H1 (cell line): ENCODE measurements at regions of chr16 and their contacts with region 1.

Region 1: GRCh38 chr16:75238132-75238852 is 13.1 kb downstream of the BCAR1 start:
- DNase-seq: no peak
- H3K4me3 ChIP-seq: no peak overlapping the region
- H3K27ac ChIP-seq: peak overlapping the region; percentile 49; the same call in 1 of the 2 replicates
- H3K4me1 ChIP-seq: peaks cover 0 to 6% (median 2%) of the 10 kb centered on the region in 4 experiments; a peak in 2 of 7 replicates
- H3K27me3 ChIP-seq: no peaks in the 10 kb centered on the region
- CTCF ChIP-seq: no peak
- EP300 ChIP-seq: no peak
- POLR2A ChIP-seq: no peak
- RAD21 ChIP-seq: no peak

Region 2: GRCh38 chr16:75138636-75139035 is 99.7 kb before region 1 on chr16:
- CTCF ChIA-PET with region 1: no interaction called
- POLR2A ChIA-PET with region 1: no interaction called
- DNase-seq: peak in 1 of 2 experiments; percentile 61
- H3K4me3 ChIP-seq: no peak overlapping the region
- H3K27ac ChIP-seq: no peak overlapping the region
- H3K4me1 ChIP-seq: peaks cover 0 to 7% (median 0%) of the 10 kb centered on the region in 4 experiments; a peak in 1 of 7 replicates
- H3K27me3 ChIP-seq: no peaks in the 10 kb centered on the region
- CTCF ChIP-seq: no peak
- EP300 ChIP-seq: no peak
- POLR2A ChIP-seq: no peak
- RAD21 ChIP-seq: no peak

Region 3: DNA sequence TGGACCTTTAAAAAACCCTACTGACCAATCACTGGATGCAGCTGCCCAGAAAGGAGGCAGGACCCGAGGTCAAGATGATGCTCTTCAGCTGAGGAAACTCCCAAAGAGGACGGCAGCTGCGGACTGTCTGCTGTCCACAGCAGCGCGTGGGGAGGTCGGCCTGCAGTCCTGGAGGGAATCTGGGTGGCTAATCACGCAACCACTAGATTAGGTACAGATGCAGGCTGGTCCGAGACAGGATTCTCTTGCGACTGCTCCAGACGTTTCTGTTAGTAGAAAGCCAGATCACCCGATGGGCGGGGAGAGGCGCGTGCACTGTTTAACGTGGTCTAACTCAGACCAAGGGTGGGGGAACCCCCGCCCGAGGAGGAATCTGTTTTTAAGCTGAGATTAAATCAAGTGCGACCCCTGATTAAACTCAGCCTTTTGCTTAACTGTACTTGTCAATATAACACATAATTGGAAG is 40.1 kb before region 1 on chr16:
- CTCF ChIA-PET with region 1: interaction called, 57 read pairs
- POLR2A ChIA-PET with region 1: interaction called, 3 read pairs
- DNase-seq: no peak
- H3K4me3 ChIP-seq: no peak overlapping the region
- H3K27ac ChIP-seq: no peak overlapping the region
- H3K4me1 ChIP-seq: peaks cover 0 to 2% (median 0%) of the 10 kb centered on the region in 4 experiments; a peak in 3 of 7 replicates
- H3K27me3 ChIP-seq: no peaks in the 10 kb centered on the region
- CTCF ChIP-seq: no peak
- EP300 ChIP-seq: no peak
- POLR2A ChIP-seq: no peak
- RAD21 ChIP-seq: no peak

Region 4: GRCh38 chr16:75218256-75219070 is 19.8 kb before region 1 on chr16 and contains the start of gene CTRB1:
- CTCF ChIA-PET with region 1: interaction called, 11 read pairs
- POLR2A ChIA-PET with region 1: no interaction called
- DNase-seq: no peak
- H3K4me3 ChIP-seq: no peak within 1 kb of the TSS
- H3K27ac ChIP-seq: no peak within 1 kb of the TSS
- H3K4me1 ChIP-seq: no peaks in the 10 kb centered on the region
- H3K27me3 ChIP-seq: no peaks in the 10 kb centered on the region
- CTCF ChIP-seq: no peak
- EP300 ChIP-seq: no peak
- POLR2A ChIP-seq: no peak
- RAD21 ChIP-seq: no peak
- total RNA-seq, gene CTRB1: not detected in 2 replicates

Region 5: DNA sequence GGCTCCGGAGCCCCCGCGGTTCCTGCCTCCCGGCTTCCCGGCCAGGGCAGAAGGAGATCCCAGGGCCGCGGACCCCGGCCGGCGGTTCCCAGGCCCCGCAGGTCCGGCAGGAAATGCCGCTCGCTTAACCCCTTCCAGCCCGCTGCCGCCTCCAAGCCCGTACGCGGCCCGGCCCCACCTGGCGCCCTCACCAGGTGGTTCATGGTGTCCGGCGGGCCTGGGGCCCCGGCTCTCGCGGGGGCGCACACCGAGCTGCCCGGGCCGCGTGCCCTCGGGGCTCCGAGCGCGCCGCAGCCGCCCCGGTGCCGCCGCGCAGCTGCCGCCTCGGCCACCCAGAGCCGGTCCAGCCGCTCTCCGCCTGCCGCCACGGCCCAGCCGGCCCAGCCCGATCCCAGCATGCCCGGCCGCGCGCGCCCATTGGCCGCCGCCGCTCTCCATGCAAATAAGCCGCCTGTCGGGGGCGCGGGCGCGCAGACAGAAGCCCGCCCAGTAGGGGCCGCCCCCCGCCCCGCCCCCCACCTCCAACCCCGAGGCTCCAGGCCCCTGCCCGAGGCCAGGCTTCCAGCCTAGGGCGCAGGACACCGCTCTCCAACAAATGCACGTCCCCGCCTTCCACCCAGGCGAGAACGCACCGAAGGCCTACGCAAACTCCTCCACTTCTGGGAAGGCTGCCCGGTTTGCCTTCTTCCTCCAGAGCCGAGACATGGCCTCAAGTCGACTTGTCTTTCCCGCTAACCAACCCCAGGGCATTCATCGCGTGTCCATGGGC is 13.2 kb after region 1 on chr16 and contains the start of gene BCAR1:
- CTCF ChIA-PET with region 1: interaction called, 236 read pairs
- POLR2A ChIA-PET with region 1: interaction called, 375 read pairs
- DNase-seq: peak; percentile 50 to 89
- H3K4me3 ChIP-seq: peak within 1 kb of the TSS; percentile 64 to 87 (median 68)
- H3K27ac ChIP-seq: peak within 1 kb of the TSS; percentile 84
- H3K4me1 ChIP-seq: peaks cover 13 to 76% (median 64%) of the 10 kb centered on the region in 4 experiments
- H3K27me3 ChIP-seq: no peaks in the 10 kb centered on the region; a peak in 1 of 7 replicates
- CTCF ChIP-seq: no peak
- EP300 ChIP-seq: no peak
- POLR2A ChIP-seq: no peak; a peak in 1 of 3 replicates
- RAD21 ChIP-seq: no peak
- total RNA-seq, gene BCAR1: 103 and 105 TPM in 2 replicates

Region 6: GRCh38 chr16:75272097-75272551 is 33.8 kb after region 1 on chr16:
- CTCF ChIA-PET with region 1: interaction called, 20 read pairs
- POLR2A ChIA-PET with region 1: interaction called, 8 read pairs
- DNase-seq: no peak
- H3K4me3 ChIP-seq: no peak overlapping the region
- H3K27ac ChIP-seq: no peak overlapping the region
- H3K4me1 ChIP-seq: no peaks in the 10 kb centered on the region
- H3K27me3 ChIP-seq: no peaks in the 10 kb centered on the region
- CTCF ChIP-seq: no peak
- EP300 ChIP-seq: no peak
- POLR2A ChIP-seq: no peak
- RAD21 ChIP-seq: no peak

Region 7: GRCh38 chr16:75311383-75311938 is 73.2 kb after region 1 on chr16:
- CTCF ChIA-PET with region 1: interaction called, 15 read pairs
- POLR2A ChIA-PET with region 1: interaction called, 3 read pairs
- DNase-seq: no peak
- H3K4me3 ChIP-seq: no peak overlapping the region
- H3K27ac ChIP-seq: no peak overlapping the region
- H3K4me1 ChIP-seq: no peaks in the 10 kb centered on the region; a peak in 1 of 7 replicates
- H3K27me3 ChIP-seq: no peaks in the 10 kb centered on the region
- CTCF ChIP-seq: no peak
- EP300 ChIP-seq: no peak
- POLR2A ChIP-seq: no peak
- RAD21 ChIP-seq: no peak

Region 8: DNA sequence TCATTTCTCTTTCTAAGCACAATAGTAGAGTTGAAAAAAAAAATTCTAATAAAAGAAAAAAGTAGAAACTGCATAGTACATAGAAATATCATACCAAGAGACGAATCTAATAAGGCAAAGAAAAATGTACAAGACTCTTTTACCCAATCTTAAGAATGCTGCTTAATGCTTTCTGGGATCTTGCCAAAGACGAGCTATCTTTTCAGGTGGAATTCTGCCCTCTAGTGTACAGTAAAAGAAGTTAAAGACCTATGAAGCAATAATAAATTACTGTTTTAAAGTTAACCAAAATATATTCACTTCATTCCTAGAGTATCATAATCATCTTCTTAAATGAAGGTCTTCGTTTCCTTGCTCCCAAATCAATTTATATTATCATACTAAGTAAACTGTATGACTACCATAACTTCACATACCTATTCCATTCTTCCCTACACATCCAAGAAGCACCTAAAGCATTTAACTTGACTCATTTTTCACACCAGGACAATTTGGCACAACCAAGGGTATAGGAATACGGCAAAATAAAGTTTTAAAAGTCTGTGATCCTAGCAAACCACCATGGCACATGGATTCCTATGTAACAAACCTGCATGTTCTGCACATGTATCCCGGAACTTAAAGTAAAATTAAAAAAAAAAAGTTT is 147.3 kb after region 1 on chr16:
- CTCF ChIA-PET with region 1: interaction called, 38 read pairs
- POLR2A ChIA-PET with region 1: no interaction called
- DNase-seq: no peak
- H3K4me3 ChIP-seq: no peak overlapping the region
- H3K27ac ChIP-seq: no peak overlapping the region
- H3K4me1 ChIP-seq: no peaks in the 10 kb centered on the region
- H3K27me3 ChIP-seq: no peaks in the 10 kb centered on the region
- CTCF ChIP-seq: peak in 2 of 3 experiments; percentile 32 to 47; a peak in 2 of 4 replicates
- EP300 ChIP-seq: no peak
- POLR2A ChIP-seq: no peak
- RAD21 ChIP-seq: peak; percentile 64 to 67